Endothelial cell of umbilical vein (primary cell): ENCODE measurements at regions of chr5 and their contacts with region 1.

Region 1: GRCh38 chr5:73298772-73299630 is 126.0 kb downstream of the TMEM174 start:
- DNase-seq: no peak
- H3K4me3 ChIP-seq: no peak overlapping the region
- H3K27ac ChIP-seq: no peak overlapping the region
- H3K4me1 ChIP-seq: no peaks in the 10 kb centered on the region
- H3K27me3 ChIP-seq: peaks cover 90 to 98% of the 10 kb centered on the region in 2 experiments
- CTCF ChIP-seq: peak; percentile 31 to 38
- POLR2A ChIP-seq: no peak

Region 2: GRCh38 chr5:73233347-73234200 is 65.4 kb before region 1 on chr5:
- CTCF ChIA-PET with region 1: interaction called, 3 read pairs
- POLR2A ChIA-PET with region 1: no interaction called
- dilution Hi-C with region 1: no loop called
- intact Hi-C with region 1: loop called (anchors 5 kb)
- DNase-seq: peak; percentile 17
- H3K4me3 ChIP-seq: peak overlapping the region in 1 of 3 experiments; percentile 1
- H3K27ac ChIP-seq: no peak overlapping the region
- H3K4me1 ChIP-seq: peaks cover 5% of the 10 kb centered on the region
- H3K27me3 ChIP-seq: peaks cover 67 to 97% of the 10 kb centered on the region in 2 experiments
- CTCF ChIP-seq: peak in 1 of 2 donors; percentile 9
- POLR2A ChIP-seq: no peak

Region 3: GRCh38 chr5:73338256-73339050 is 39.5 kb after region 1 on chr5:
- CTCF ChIA-PET with region 1: no interaction called
- POLR2A ChIA-PET with region 1: no interaction called
- dilution Hi-C with region 1: no loop called
- intact Hi-C with region 1: no loop called
- DNase-seq: no peak
- H3K4me3 ChIP-seq: no peak overlapping the region
- H3K27ac ChIP-seq: no peak overlapping the region
- H3K4me1 ChIP-seq: no peaks in the 10 kb centered on the region
- H3K27me3 ChIP-seq: peaks cover 49 to 68% of the 10 kb centered on the region in 2 experiments
- CTCF ChIP-seq: no peak
- POLR2A ChIP-seq: no peak

Region 4: GRCh38 chr5:73370640-73371583 is 71.9 kb after region 1 on chr5:
- CTCF ChIA-PET with region 1: no interaction called
- POLR2A ChIA-PET with region 1: no interaction called
- dilution Hi-C with region 1: no loop called
- intact Hi-C with region 1: loop called (anchors 2 kb)
- DNase-seq: peak; percentile 97
- H3K4me3 ChIP-seq: peak overlapping the region in 1 of 3 experiments; percentile 0
- H3K27ac ChIP-seq: peak overlapping the region; percentile 86
- H3K4me1 ChIP-seq: peaks cover 33% of the 10 kb centered on the region
- H3K27me3 ChIP-seq: no peaks in the 10 kb centered on the region
- CTCF ChIP-seq: no peak
- POLR2A ChIP-seq: peak; percentile 69